ENCODE measurements at regions of chr6 and their contacts with region 1.

Region 1: GRCh38 chr6:157068691-157069324 is 254.5 kb downstream of the TMEM242 start:
- DNase-seq: no peak
- ATAC-seq: peak; percentile 94
- H3K4me3 Mint-ChIP-seq: peak overlapping the region; percentile 30
- H3K27ac Mint-ChIP-seq: peak overlapping the region; percentile 76
- H3K4me1 Mint-ChIP-seq: peaks cover 59% of the 10 kb centered on the region
- H3K27me3 Mint-ChIP-seq: no peaks in the 10 kb centered on the region
- CTCF ChIP-seq: no peak

Region 2: GRCh38 chr6:157054531-157054979 is 14.3 kb before region 1 on chr6:
- CTCF ChIA-PET with region 1: interaction called, 5 read pairs
- POLR2A ChIA-PET with region 1: interaction called, 15 read pairs
- intact Hi-C with region 1: no loop called
- DNase-seq: peak; percentile 72
- ATAC-seq: peak; percentile 86
- H3K4me3 Mint-ChIP-seq: peak overlapping the region; percentile 61
- H3K27ac Mint-ChIP-seq: peak overlapping the region; percentile 98
- H3K4me1 Mint-ChIP-seq: peaks cover 42% of the 10 kb centered on the region
- H3K27me3 Mint-ChIP-seq: no peaks in the 10 kb centered on the region
- CTCF ChIP-seq: no peak

Region 3: GRCh38 chr6:157107915-157108651 is 39.3 kb after region 1 on chr6:
- CTCF ChIA-PET with region 1: no interaction called
- POLR2A ChIA-PET with region 1: no interaction called
- intact Hi-C with region 1: loop called (anchors 5 kb)
- DNase-seq: peak; percentile 26
- ATAC-seq: peak; percentile 90
- H3K4me3 Mint-ChIP-seq: no peak overlapping the region
- H3K27ac Mint-ChIP-seq: peak overlapping the region; percentile 67
- H3K4me1 Mint-ChIP-seq: peaks cover 27% of the 10 kb centered on the region
- H3K27me3 Mint-ChIP-seq: no peaks in the 10 kb centered on the region
- CTCF ChIP-seq: no peak

Region 4: DNA sequence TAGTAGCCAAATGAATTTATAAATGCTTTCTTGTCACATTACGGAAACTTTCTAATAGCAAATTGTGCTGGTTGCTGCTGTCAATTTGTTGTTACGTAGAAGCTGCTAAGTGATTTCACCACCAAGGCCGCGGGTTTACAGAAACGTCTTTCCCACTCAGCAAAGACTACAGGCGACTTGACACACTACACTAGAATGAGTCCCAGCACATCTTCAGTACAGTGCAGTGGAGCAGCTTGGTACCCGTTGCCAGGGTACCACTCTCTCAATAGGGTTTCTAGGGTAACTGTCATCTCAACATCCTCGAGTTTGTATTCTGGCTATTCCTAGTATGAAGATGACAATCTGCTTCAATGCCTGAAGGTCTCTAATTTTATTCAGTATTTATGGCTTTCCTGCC is 289.5 kb after region 1 on chr6:
- CTCF ChIA-PET with region 1: no interaction called
- POLR2A ChIA-PET with region 1: no interaction called
- intact Hi-C with region 1: no loop called
- DNase-seq: no peak
- ATAC-seq: no peak
- H3K4me3 Mint-ChIP-seq: no peak overlapping the region
- H3K27ac Mint-ChIP-seq: no peak overlapping the region
- H3K4me1 Mint-ChIP-seq: no peaks in the 10 kb centered on the region
- H3K27me3 Mint-ChIP-seq: peaks cover 22% of the 10 kb centered on the region
- CTCF ChIP-seq: no peak